ENCODE measurements at regions of chr17 and their contacts with region 1.

Region 1: GRCh38 chr17:7239091-7240027 is at the start of gene PHF23:
- DNase-seq: peak; percentile 91 to 98 (median 97)
- ATAC-seq: peak; percentile 78
- H3K4me3 ChIP-seq: peak within 1 kb of the TSS; percentile 76
- H3K4me3 Mint-ChIP-seq: peak within 1 kb of the TSS; percentile 88 to 98 (median 95)
- H3K27ac ChIP-seq: peak within 1 kb of the TSS; percentile 92
- H3K27ac Mint-ChIP-seq: peak within 1 kb of the TSS; percentile 55 to 100 (median 95)
- H3K4me1 ChIP-seq: peaks cover 32 to 44% of the 10 kb centered on the region in 2 donors
- H3K4me1 Mint-ChIP-seq: peaks cover 38 to 67% (median 60%) of the 10 kb centered on the region in 7 donors
- H3K27me3 ChIP-seq: no peaks in the 10 kb centered on the region
- H3K27me3 Mint-ChIP-seq: peaks cover 0 to 7% (median 0%) of the 10 kb centered on the region in 5 donors
- total RNA-seq, gene PHF23: 12.3 to 58.7 (median 55.2) TPM

Region 2: GRCh38 chr17:7204828-7205461 is 34.4 kb before region 1 on chr17:
- CTCF ChIA-PET with region 1: interaction called, 3 read pairs
- POLR2A ChIA-PET with region 1: interaction called, 3 read pairs
- intact Hi-C with region 1: loop called (anchors 1 kb)
- DNase-seq: peak; percentile 90 to 99 (median 97)
- ATAC-seq: peak; percentile 90
- H3K4me3 ChIP-seq: peak overlapping the region; percentile 77
- H3K4me3 Mint-ChIP-seq: peak overlapping the region; percentile 67 to 94 (median 85)
- H3K27ac ChIP-seq: peak overlapping the region; percentile 91
- H3K27ac Mint-ChIP-seq: peak overlapping the region; percentile 88 to 99 (median 95)
- H3K4me1 ChIP-seq: peaks cover 15 to 17% of the 10 kb centered on the region in 2 donors
- H3K4me1 Mint-ChIP-seq: peaks cover 28 to 39% (median 32%) of the 10 kb centered on the region in 7 donors
- H3K27me3 ChIP-seq: no peaks in the 10 kb centered on the region
- H3K27me3 Mint-ChIP-seq: no peaks in the 10 kb centered on the region

Region 3: GRCh38 chr17:7252176-7253043 is 13.1 kb after region 1 on chr17 and contains the start of gene ELP5:
- CTCF ChIA-PET with region 1: interaction called, 4 read pairs
- POLR2A ChIA-PET with region 1: interaction called, 78 read pairs
- intact Hi-C with region 1: loop called (anchors 1 kb)
- DNase-seq: peak in 5 of 9 donors; percentile 73 to 90 (median 83)
- ATAC-seq: peak; percentile 69
- H3K4me3 ChIP-seq: peak within 1 kb of the TSS; percentile 91
- H3K4me3 Mint-ChIP-seq: peak within 1 kb of the TSS; percentile 85 to 98 (median 96)
- H3K27ac ChIP-seq: peak within 1 kb of the TSS; percentile 94
- H3K27ac Mint-ChIP-seq: peak within 1 kb of the TSS; percentile 95 to 100 (median 99)
- H3K4me1 ChIP-seq: peaks cover 22 to 32% of the 10 kb centered on the region in 2 donors
- H3K4me1 Mint-ChIP-seq: peaks cover 29 to 51% (median 42%) of the 10 kb centered on the region in 7 donors
- H3K27me3 ChIP-seq: no peaks in the 10 kb centered on the region
- H3K27me3 Mint-ChIP-seq: peaks cover 0 to 4% (median 0%) of the 10 kb centered on the region in 5 donors
- total RNA-seq, gene ELP5: 26.9 to 49.1 (median 32.9) TPM

Region 4: GRCh38 chr17:7329374-7329996 is 90.1 kb after region 1 on chr17:
- CTCF ChIA-PET with region 1: no interaction called
- POLR2A ChIA-PET with region 1: no interaction called
- intact Hi-C with region 1: loop called in 1 of 2 experiments (anchors 1 kb)
- DNase-seq: peak; percentile 84 to 98 (median 98)
- ATAC-seq: peak; percentile 91
- H3K4me3 ChIP-seq: peak overlapping the region; percentile 95
- H3K4me3 Mint-ChIP-seq: peak overlapping the region; percentile 89 to 100 (median 96)
- H3K27ac ChIP-seq: peak overlapping the region; percentile 88
- H3K27ac Mint-ChIP-seq: peak overlapping the region; percentile 93 to 99 (median 97)
- H3K4me1 ChIP-seq: peaks cover 15 to 36% of the 10 kb centered on the region in 2 donors
- H3K4me1 Mint-ChIP-seq: peaks cover 29 to 61% (median 44%) of the 10 kb centered on the region in 7 donors
- H3K27me3 ChIP-seq: no peaks in the 10 kb centered on the region
- H3K27me3 Mint-ChIP-seq: no peaks in the 10 kb centered on the region

Region 5: GRCh38 chr17:7614422-7615264 is 375.3 kb after region 1 on chr17 and contains the start of gene FXR2:
- CTCF ChIA-PET with region 1: no interaction called
- POLR2A ChIA-PET with region 1: no interaction called
- intact Hi-C with region 1: loop called in 1 of 2 experiments (anchors 1 kb)
- DNase-seq: peak; percentile 96 to 100 (median 99)
- ATAC-seq: peak; percentile 93
- H3K4me3 ChIP-seq: peak within 1 kb of the TSS; percentile 86
- H3K4me3 Mint-ChIP-seq: peak within 1 kb of the TSS; percentile 85 to 97 (median 92)
- H3K27ac ChIP-seq: peak within 1 kb of the TSS; percentile 81
- H3K27ac Mint-ChIP-seq: peak within 1 kb of the TSS; percentile 89 to 99 (median 97)
- H3K4me1 ChIP-seq: peaks cover 16 to 27% of the 10 kb centered on the region in 2 donors
- H3K4me1 Mint-ChIP-seq: peaks cover 29 to 47% (median 40%) of the 10 kb centered on the region in 7 donors
- H3K27me3 ChIP-seq: no peaks in the 10 kb centered on the region
- H3K27me3 Mint-ChIP-seq: peaks cover 0 to 6% (median 0%) of the 10 kb centered on the region in 5 donors
- total RNA-seq, gene FXR2: 24.6 to 46.9 (median 34.0) TPM

Measured in naive thymus-derived CD4-positive, alpha-beta T cell (primary cell).